MCF 10A (cell line): ENCODE measurements at regions of chr6 and their contacts with region 1.

Region 1: GRCh38 chr6:138428944-138429598 is 25.0 kb downstream of the HEBP2 start:
- DNase-seq: peak; percentile 61
- H3K4me3 Mint-ChIP-seq: no peak overlapping the region
- H3K27ac Mint-ChIP-seq: no peak overlapping the region
- H3K4me1 Mint-ChIP-seq: no peaks in the 10 kb centered on the region
- H3K27me3 Mint-ChIP-seq: no peaks in the 10 kb centered on the region
- CTCF ChIP-seq: peak; percentile 55

Region 2: GRCh38 chr6:138318741-138319375 is 110.2 kb before region 1 on chr6:
- CTCF ChIA-PET with region 1: no interaction called
- POLR2A ChIA-PET with region 1: no interaction called
- intact Hi-C with region 1: no loop called
- DNase-seq: peak; percentile 30
- H3K4me3 Mint-ChIP-seq: no peak overlapping the region
- H3K27ac Mint-ChIP-seq: no peak overlapping the region
- H3K4me1 Mint-ChIP-seq: no peaks in the 10 kb centered on the region
- H3K27me3 Mint-ChIP-seq: no peaks in the 10 kb centered on the region
- CTCF ChIP-seq: no peak

Region 3: GRCh38 chr6:138450445-138450844 is 21.4 kb after region 1 on chr6:
- CTCF ChIA-PET with region 1: interaction called, 15 read pairs
- POLR2A ChIA-PET with region 1: no interaction called
- intact Hi-C with region 1: no loop called
- DNase-seq: no peak
- H3K4me3 Mint-ChIP-seq: no peak overlapping the region
- H3K27ac Mint-ChIP-seq: no peak overlapping the region
- H3K4me1 Mint-ChIP-seq: peaks cover 10% of the 10 kb centered on the region
- H3K27me3 Mint-ChIP-seq: no peaks in the 10 kb centered on the region
- CTCF ChIP-seq: no peak

Region 4: GRCh38 chr6:138493413-138493812 is 64.3 kb after region 1 on chr6:
- CTCF ChIA-PET with region 1: interaction called, 15 read pairs
- POLR2A ChIA-PET with region 1: no interaction called
- intact Hi-C with region 1: no loop called
- DNase-seq: peak; percentile 79
- H3K4me3 Mint-ChIP-seq: peak overlapping the region; percentile 67
- H3K27ac Mint-ChIP-seq: peak overlapping the region; percentile 98
- H3K4me1 Mint-ChIP-seq: peaks cover 12% of the 10 kb centered on the region
- H3K27me3 Mint-ChIP-seq: no peaks in the 10 kb centered on the region
- CTCF ChIP-seq: no peak

Region 5: GRCh38 chr6:138509371-138509770 is 80.3 kb after region 1 on chr6:
- CTCF ChIA-PET with region 1: interaction called, 213 read pairs
- POLR2A ChIA-PET with region 1: interaction called, 24 read pairs
- intact Hi-C with region 1: loop called (anchors 1 kb)
- DNase-seq: peak; percentile 71
- H3K4me3 Mint-ChIP-seq: no peak overlapping the region
- H3K27ac Mint-ChIP-seq: no peak overlapping the region
- H3K4me1 Mint-ChIP-seq: peaks cover 18% of the 10 kb centered on the region
- H3K27me3 Mint-ChIP-seq: no peaks in the 10 kb centered on the region
- CTCF ChIP-seq: peak; percentile 33

Region 6: GRCh38 chr6:138588805-138589434 is 159.8 kb after region 1 on chr6:
- CTCF ChIA-PET with region 1: interaction called, 19 read pairs
- POLR2A ChIA-PET with region 1: no interaction called
- intact Hi-C with region 1: loop called (anchors 1 kb)
- DNase-seq: peak; percentile 84
- H3K4me3 Mint-ChIP-seq: no peak overlapping the region
- H3K27ac Mint-ChIP-seq: no peak overlapping the region
- H3K4me1 Mint-ChIP-seq: peaks cover 31% of the 10 kb centered on the region
- H3K27me3 Mint-ChIP-seq: no peaks in the 10 kb centered on the region
- CTCF ChIP-seq: peak; percentile 82